ENCODE measurements at regions of chr11 and their contacts with region 1.

Region 1: DNA sequence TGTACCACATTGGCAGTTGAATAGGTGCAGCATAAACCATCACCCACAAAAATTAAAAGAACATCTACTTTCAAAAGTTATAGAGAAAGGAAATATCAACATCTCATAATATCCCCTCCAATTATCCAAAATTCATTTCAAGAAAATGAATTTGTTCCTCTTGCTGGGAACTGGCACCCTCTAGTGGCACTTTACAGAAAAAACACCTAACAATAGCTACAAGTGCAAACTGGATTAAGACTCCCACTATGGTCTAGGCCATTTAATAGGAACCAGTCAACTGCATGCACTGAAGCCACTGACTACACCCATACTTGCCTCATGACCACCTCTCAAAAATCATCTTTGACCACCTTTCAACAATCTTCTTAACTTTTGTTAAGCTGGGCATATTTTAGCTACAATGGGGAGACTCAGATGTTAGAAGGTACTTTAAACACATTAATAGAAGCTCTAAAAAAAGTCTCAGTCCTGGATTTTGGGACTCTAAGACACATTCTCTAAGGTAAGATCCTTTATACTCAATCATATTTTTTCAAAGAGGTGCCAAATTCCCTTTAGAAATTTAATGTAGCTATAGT is 17.3 kb downstream of the TRAF6 start:
- DNase-seq: peak; percentile 34
- H3K4me3 Mint-ChIP-seq: no peak overlapping the region
- H3K27ac Mint-ChIP-seq: peak overlapping the region; percentile 18
- H3K4me1 Mint-ChIP-seq: peaks cover 15% of the 10 kb centered on the region
- H3K27me3 Mint-ChIP-seq: no peaks in the 10 kb centered on the region

Region 2: DNA sequence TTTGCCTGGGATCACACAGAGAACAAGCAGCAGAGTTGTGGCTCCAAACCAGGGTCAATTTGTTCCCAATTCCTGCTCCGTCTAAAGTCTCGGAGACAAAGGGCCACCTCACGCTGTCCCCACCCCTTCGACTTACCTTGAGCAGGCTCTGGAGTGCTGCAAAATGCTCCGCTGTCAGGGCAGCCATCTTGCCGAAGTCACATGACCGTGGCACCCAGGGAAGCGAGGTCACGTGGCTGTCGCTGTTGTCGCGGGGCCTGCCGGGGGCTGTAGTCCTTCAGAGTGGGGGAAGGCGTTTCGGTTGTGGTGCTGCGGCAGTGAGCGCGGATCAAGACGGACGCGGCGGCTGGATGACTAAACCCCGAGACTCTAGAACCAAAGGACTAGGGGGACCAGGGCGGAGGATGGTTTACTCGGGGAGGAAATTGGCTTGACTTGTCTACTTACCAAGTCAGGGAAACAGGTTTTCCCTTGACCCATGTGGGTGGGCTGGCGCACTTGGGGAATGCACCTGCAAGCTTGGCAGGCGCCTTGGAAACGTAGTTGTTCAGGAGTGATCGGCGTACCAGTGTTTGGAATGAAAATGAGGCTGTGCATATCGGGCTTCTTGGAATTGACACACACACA is 203.5 kb before region 1 on chr11 and contains the start of gene COMMD9:
- CTCF ChIA-PET with region 1: interaction called, 152 read pairs
- POLR2A ChIA-PET with region 1: interaction called, 4 read pairs
- DNase-seq: peak; percentile 96
- H3K4me3 Mint-ChIP-seq: peak within 1 kb of the TSS; percentile 87
- H3K27ac Mint-ChIP-seq: peak within 1 kb of the TSS; percentile 64
- H3K4me1 Mint-ChIP-seq: peaks cover 30% of the 10 kb centered on the region
- H3K27me3 Mint-ChIP-seq: no peaks in the 10 kb centered on the region
- total RNA-seq, gene COMMD9: 30.5 to 34.1 TPM

Region 3: GRCh38 chr11:36300651-36301050 is 192.2 kb before region 1 on chr11:
- CTCF ChIA-PET with region 1: interaction called, 152 read pairs
- POLR2A ChIA-PET with region 1: no interaction called
- DNase-seq: no peak
- H3K4me3 Mint-ChIP-seq: no peak overlapping the region
- H3K27ac Mint-ChIP-seq: no peak overlapping the region
- H3K4me1 Mint-ChIP-seq: no peaks in the 10 kb centered on the region
- H3K27me3 Mint-ChIP-seq: peaks cover 5% of the 10 kb centered on the region

Region 4: DNA sequence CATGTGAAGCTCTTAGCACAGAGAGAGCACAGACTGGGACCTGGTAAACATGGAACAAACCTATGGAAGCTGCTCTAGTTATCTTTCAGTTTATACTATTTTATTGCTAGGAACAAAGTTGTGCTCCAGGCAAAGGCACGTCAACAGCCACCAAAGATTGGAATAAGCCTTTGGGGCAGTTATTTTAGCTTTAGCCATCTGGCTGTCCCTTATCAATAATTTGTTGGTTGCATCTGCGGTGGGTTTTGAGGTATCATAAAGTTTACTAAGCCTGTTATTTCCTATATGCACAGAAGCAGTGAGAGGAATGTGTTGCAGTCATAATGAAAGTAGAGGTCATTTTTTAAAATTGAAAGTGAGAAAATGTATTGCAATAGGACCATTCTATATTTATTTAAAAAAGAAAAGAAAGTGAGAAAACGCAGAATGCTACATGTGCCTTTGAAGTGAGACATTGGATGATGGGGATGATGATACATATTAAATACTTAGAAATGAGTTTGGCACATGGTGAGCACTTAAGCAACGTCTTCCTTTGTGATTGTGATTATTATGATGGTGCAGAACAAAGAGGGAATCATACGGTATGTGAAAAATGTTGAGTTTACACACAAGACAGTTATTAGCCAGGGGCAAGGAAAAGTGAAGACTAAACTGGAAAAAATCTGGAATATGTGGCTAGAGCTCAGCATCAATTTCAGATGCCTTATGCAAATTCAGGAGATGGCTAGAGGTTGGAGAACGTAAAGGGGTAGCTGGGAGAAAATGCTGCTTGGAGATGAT is 138.4 kb before region 1 on chr11:
- CTCF ChIA-PET with region 1: interaction called, 14 read pairs
- POLR2A ChIA-PET with region 1: interaction called, 4 read pairs
- DNase-seq: no peak
- H3K4me3 Mint-ChIP-seq: peak overlapping the region; percentile 1
- H3K27ac Mint-ChIP-seq: no peak overlapping the region
- H3K4me1 Mint-ChIP-seq: peaks cover 60% of the 10 kb centered on the region
- H3K27me3 Mint-ChIP-seq: peaks cover 37% of the 10 kb centered on the region

Region 5: GRCh38 chr11:36509694-36510566 is 17.1 kb after region 1 on chr11 and contains the start of gene TRAF6:
- CTCF ChIA-PET with region 1: interaction called, 34 read pairs
- POLR2A ChIA-PET with region 1: interaction called, 19 read pairs
- DNase-seq: peak; percentile 89
- H3K4me3 Mint-ChIP-seq: peak within 1 kb of the TSS; percentile 94
- H3K27ac Mint-ChIP-seq: peak within 1 kb of the TSS; percentile 83
- H3K4me1 Mint-ChIP-seq: peaks cover 17% of the 10 kb centered on the region
- H3K27me3 Mint-ChIP-seq: peaks cover 16% of the 10 kb centered on the region
- total RNA-seq, gene TRAF6: 12.4 to 12.8 TPM

Region 6: GRCh38 chr11:36672813-36673450 is 180.1 kb after region 1 on chr11:
- CTCF ChIA-PET with region 1: no interaction called
- POLR2A ChIA-PET with region 1: no interaction called
- DNase-seq: no peak
- H3K4me3 Mint-ChIP-seq: no peak overlapping the region
- H3K27ac Mint-ChIP-seq: no peak overlapping the region
- H3K4me1 Mint-ChIP-seq: no peaks in the 10 kb centered on the region
- H3K27me3 Mint-ChIP-seq: no peaks in the 10 kb centered on the region

Region 7: DNA sequence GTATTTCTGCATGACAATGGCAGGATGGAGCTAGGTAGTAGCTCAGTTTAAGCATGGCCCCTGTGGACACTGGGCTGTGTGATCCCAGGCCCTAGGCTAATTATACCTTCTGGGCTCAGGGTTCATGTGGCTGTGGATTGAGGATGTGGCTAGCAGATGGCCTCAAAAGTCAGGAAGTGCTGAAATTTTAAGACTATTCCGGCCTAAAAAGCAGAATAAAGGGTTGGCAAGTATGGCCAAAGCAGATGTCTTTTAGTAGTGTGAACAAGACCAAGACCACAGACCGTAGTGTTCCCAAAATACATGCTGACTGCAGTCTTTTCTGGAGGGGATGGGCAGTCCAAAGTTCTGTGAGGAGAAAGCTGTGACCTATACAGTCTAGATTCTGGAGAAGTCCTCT is 220.9 kb after region 1 on chr11:
- CTCF ChIA-PET with region 1: no interaction called
- POLR2A ChIA-PET with region 1: no interaction called
- DNase-seq: no peak
- H3K4me3 Mint-ChIP-seq: no peak overlapping the region
- H3K27ac Mint-ChIP-seq: no peak overlapping the region
- H3K4me1 Mint-ChIP-seq: no peaks in the 10 kb centered on the region
- H3K27me3 Mint-ChIP-seq: peaks cover 20% of the 10 kb centered on the region

Measured in activated CD4-positive, alpha-beta memory T cell treated with anti-CD3 and anti-CD28 coated beads, Interleukin-2, amount 10 ng/mL, durations not matched to agents 7 days and 5 days (primary cell).